ENCODE measurements at regions of chr21 and their contacts with region 1.

Region 1: DNA sequence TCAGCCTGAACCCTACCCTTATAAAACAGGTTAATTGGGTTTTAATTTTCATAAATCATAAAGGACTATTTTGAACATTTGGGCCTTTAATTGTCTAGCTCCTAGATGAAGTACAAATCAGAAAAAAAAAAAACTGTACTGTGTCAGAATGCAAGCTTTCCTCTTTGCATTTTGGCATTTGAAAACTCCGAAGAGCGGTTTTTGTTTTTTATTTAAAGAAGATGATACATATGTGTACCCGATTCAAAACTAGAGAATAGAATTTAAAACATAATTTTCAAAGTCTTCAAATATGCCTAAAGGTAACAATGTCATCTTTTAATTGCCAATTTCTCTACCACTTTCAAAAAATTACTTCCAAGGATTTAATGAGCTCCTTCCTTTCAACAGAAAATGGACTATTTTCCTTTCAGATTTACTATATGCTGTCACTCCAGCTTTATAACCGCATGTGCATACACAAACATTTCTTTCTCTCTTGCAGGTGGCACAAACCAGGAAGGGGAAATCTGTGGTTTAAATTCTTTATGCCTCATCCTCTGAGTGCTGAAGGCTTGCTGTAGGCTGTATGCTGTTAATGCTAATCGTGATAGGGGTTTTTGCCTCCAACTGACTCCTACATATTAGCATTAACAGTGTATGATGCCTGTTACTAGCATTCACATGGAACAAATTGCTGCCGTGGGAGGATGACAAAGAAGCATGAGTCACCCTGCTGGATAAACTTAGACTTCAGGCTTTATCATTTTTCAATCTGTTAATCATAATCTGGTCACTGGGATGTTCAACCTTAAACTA is 33.7 kb downstream of the MRPL39 start:
- DNase-seq: no peak
- ATAC-seq: peak; percentile 72
- H3K4me3 Mint-ChIP-seq: peak overlapping the region; percentile 76
- H3K27ac Mint-ChIP-seq: peak overlapping the region; percentile 91
- H3K4me1 Mint-ChIP-seq: peaks cover 54% of the 10 kb centered on the region
- H3K27me3 Mint-ChIP-seq: no peaks in the 10 kb centered on the region

Region 2: GRCh38 chr21:25528510-25528909 is 45.1 kb before region 1 on chr21:
- POLR2A ChIA-PET with region 1: no interaction called
- DNase-seq: no peak
- ATAC-seq: no peak
- H3K4me3 Mint-ChIP-seq: no peak overlapping the region
- H3K27ac Mint-ChIP-seq: no peak overlapping the region
- H3K4me1 Mint-ChIP-seq: peaks cover 1% of the 10 kb centered on the region
- H3K27me3 Mint-ChIP-seq: no peaks in the 10 kb centered on the region

Region 3: DNA sequence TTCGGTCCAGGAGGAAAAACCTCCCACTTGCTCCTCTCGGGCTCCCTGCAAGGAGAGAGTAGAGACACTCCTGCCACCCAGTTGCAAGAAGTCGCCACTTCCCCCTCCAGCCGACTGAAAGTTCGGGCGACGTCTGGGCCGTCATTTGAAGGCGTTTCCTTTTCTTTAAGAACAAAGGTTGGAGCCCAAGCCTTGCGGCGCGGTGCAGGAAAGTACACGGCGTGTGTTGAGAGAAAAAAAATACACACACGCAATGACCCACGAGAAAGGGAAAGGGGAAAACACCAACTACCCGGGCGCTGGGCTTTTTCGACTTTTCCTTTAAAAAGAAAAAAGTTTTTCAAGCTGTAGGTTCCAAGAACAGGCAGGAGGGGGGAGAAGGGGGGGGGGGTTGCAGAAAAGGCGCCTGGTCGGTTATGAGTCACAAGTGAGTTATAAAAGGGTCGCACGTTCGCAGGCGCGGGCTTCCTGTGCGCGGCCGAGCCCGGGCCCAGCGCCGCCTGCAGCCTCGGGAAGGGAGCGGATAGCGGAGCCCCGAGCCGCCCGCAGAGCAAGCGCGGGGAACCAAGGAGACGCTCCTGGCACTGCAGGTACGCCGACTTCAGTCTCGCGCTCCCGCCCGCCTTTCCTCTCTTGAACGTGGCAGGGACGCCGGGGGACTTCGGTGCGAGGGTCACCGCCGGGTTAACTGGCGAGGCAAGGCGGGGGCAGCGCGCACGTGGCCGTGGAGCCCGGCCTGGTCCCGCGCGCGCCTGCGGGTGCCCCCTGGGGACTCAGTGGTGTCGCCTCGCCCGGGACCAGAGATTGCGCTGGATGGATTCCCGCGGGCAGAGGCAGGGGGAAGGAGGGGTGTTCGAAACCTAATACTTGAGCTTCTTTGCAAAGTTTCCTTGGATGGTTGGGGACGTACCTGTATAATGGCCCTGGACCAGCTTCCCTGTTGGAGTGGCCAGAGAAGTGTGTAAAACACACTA is 11.7 kb before region 1 on chr21:
- POLR2A ChIA-PET with region 1: interaction called, 17 read pairs
- DNase-seq: peak; percentile 80
- ATAC-seq: peak; percentile 73
- H3K4me3 Mint-ChIP-seq: peak overlapping the region; percentile 95
- H3K27ac Mint-ChIP-seq: peak overlapping the region; percentile 97
- H3K4me1 Mint-ChIP-seq: peaks cover 50% of the 10 kb centered on the region
- H3K27me3 Mint-ChIP-seq: no peaks in the 10 kb centered on the region

Measured in activated naive CD8-positive, alpha-beta T cell treated with anti-CD3 and anti-CD28 coated beads, Interleukin-2, amount 10 ng/mL, durations not matched to agents 7 days and 5 days (primary cell).